ENCODE measurements at regions of chr2 and their contacts with region 1.

Region 1: DNA sequence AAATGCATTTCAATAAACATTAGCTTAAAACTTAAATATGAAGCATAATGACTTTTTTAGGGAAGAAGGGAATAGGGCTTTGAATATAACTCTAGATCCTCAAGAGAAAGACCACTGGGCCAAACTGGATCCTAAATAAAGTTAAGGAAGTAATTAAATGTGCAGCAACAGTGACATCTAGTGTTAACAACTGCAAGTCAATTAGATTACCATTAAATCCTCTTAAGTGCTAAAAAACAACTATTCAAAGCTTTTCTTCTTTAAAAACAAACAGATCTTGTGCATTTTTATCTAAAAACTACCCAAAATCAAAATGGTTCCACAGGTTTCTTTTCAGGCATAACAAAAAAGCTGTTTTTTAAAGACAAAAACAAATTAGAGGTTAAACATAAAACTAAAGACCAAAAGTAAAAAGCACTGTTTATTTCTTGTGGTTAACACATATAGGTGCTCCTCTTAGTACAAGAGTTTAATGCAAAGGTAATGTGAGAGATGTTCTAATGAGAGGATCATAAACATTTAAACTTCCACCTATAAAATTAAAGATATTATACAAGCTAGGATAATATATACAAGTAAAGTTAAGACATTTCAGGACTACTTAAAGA is 111.4 kb downstream of the THADA start:
- DNase-seq: peak in 1 of 2 experiments; percentile 21
- H3K4me3 ChIP-seq: no peak overlapping the region
- H3K27ac ChIP-seq: no peak overlapping the region
- H3K4me1 ChIP-seq: no peaks in the 10 kb centered on the region
- H3K27me3 ChIP-seq: no peaks in the 10 kb centered on the region
- CTCF ChIP-seq: peak in 2 of 3 experiments; percentile 38 to 51; a peak in 2 of 4 replicates
- EP300 ChIP-seq: no peak
- POLR2A ChIP-seq: no peak
- RAD21 ChIP-seq: peak; percentile 75 to 81

Region 2: DNA sequence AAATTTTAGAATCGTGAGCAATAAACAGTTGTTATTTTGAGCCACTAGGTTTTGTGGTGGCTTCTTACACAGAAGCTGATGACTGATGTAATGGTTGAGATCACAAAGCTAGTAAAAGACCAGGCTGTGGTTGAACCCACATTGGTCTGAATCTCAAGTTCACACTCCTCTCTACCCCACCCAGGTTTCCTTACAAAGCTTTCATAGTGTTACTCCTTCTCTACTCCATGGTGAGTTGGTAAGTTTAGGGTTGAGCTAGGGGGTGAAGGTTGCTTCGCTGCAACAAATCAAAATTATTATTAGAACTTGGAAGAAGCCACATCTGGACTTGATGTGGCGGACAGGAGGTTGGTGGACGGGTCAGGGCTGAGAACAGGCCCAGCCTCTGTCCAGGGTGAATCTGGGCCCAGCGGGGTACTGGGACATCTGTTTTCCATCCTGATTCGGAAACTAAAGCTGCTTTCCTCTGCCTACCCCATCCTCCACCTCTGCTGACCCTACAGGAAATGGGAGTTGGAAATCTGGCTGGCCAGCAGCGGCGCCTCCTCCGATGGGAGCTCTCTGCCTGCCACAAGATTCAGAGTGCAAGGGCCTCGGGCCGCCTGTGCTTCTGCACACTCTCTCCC is 344.3 kb before region 1 on chr2:
- CTCF ChIA-PET with region 1: interaction called, 15 read pairs
- POLR2A ChIA-PET with region 1: no interaction called
- DNase-seq: no peak
- H3K4me3 ChIP-seq: no peak overlapping the region
- H3K27ac ChIP-seq: no peak overlapping the region
- H3K4me1 ChIP-seq: peaks cover 0 to 18% (median 8%) of the 10 kb centered on the region in 4 experiments; a peak in 6 of 7 replicates
- H3K27me3 ChIP-seq: no peaks in the 10 kb centered on the region
- CTCF ChIP-seq: no peak
- EP300 ChIP-seq: no peak
- POLR2A ChIP-seq: no peak
- RAD21 ChIP-seq: no peak

Region 3: DNA sequence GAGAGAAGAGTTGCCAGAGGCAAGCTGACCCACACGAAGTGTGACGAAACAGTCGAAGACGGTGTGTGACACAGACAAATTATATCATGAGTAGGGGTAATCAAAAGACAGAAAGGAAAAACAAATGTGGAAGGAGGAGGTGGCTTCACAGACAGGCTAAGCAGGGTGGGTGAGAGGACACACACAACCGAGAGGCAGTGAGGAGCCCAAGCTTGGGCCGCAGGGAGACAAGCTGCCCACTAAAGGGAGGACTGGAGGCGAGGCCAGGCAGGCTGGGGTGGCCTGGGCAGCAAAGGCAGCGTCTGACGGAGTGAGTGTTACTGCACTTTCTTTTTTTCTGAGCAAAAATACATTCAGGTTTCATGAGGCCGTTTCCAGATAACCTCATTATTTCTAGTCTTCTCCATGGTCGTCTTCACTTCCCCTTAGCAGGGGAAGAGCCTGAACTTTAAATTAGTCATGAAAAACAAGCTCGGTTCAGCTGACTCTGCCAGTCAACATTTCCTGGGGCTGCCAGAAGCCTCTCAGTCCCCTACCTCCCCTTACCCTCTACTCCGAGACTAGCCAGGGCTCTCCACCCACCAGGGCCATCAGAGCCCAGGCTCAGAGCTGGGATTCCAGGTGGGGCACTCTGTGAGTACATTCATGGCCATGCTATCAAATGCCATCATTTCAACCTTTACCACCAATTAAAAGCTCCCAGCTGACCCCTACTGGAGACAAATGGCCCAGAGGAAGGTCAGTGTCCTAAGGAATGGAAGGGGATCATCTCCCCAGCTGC is 244.3 kb before region 1 on chr2:
- CTCF ChIA-PET with region 1: interaction called, 17 read pairs
- POLR2A ChIA-PET with region 1: no interaction called
- DNase-seq: no peak
- H3K4me3 ChIP-seq: no peak overlapping the region
- H3K27ac ChIP-seq: no peak overlapping the region
- H3K4me1 ChIP-seq: no peaks in the 10 kb centered on the region; a peak in 1 of 7 replicates
- H3K27me3 ChIP-seq: no peaks in the 10 kb centered on the region
- CTCF ChIP-seq: peak; percentile 26 to 56 (median 54)
- EP300 ChIP-seq: no peak
- POLR2A ChIP-seq: no peak
- RAD21 ChIP-seq: peak; percentile 48 to 68

Region 4: GRCh38 chr2:43367012-43367782 is 117.2 kb before region 1 on chr2:
- CTCF ChIA-PET with region 1: no interaction called
- POLR2A ChIA-PET with region 1: no interaction called
- DNase-seq: no peak
- H3K4me3 ChIP-seq: no peak overlapping the region
- H3K27ac ChIP-seq: no peak overlapping the region
- H3K4me1 ChIP-seq: no peaks in the 10 kb centered on the region; a peak in 2 of 7 replicates
- H3K27me3 ChIP-seq: no peaks in the 10 kb centered on the region
- CTCF ChIP-seq: no peak
- EP300 ChIP-seq: no peak
- POLR2A ChIP-seq: no peak
- RAD21 ChIP-seq: no peak

Region 5: GRCh38 chr2:43472527-43473194 is 11.8 kb before region 1 on chr2:
- CTCF ChIA-PET with region 1: interaction called, 15 read pairs
- POLR2A ChIA-PET with region 1: no interaction called
- DNase-seq: no peak
- H3K4me3 ChIP-seq: no peak overlapping the region
- H3K27ac ChIP-seq: no peak overlapping the region
- H3K4me1 ChIP-seq: no peaks in the 10 kb centered on the region
- H3K27me3 ChIP-seq: peaks cover 0 to 1% (median 0%) of the 10 kb centered on the region in 4 experiments; a peak in 1 of 7 replicates
- CTCF ChIP-seq: no peak
- EP300 ChIP-seq: no peak
- POLR2A ChIP-seq: no peak
- RAD21 ChIP-seq: no peak

Measured in H1 (cell line).